Activated B cell treated with CpG ODN at 0.5 μM for 24 hours (primary cell): ENCODE measurements at regions of chr3 and their contacts with region 1.

Region 1: DNA sequence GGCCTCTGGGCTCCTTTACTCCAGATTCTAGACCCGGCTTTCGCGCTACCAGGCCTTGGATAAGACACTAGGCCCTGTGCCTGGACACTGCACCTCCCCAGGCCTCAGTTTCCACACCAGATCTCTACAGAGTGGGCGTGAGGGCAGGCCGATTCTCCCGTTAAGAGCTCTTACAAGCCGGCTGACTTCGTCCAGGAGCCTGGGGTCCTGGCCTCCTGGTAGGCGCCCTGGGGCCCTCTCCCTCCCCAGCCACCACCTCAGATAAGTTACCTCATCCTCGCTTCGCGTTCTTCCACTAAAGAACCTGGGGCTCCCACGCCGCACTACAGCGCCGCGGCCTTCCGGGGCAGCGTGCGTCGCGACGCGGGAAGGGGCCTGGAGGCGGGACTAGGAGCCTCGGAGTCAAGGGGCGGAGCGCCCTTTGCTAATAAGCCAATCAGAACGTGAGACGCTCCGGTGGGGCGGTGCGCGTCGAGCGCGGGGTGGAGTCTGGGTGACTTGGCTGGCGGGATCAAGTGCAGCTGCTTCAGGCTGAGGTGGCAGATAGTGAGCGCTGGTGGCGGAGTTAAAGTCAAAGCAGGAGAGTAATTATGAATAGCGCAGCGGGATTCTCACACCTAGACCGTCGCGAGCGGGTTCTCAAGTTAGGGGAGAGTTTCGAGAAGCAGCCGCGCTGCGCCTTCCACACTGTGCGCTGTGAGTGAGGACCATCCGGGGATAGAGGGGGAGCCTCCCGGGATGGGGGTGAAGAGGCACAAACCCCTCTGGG is at the starts of genes EAF2 and IQCB1:
- DNase-seq: peak; percentile 93
- ATAC-seq: peak; percentile 98
- H3K4me3 Mint-ChIP-seq: peak within 1 kb of the TSS; percentile 99
- H3K27ac Mint-ChIP-seq: peak within 1 kb of the TSS; percentile 95
- H3K4me1 Mint-ChIP-seq: peaks cover 67% of the 10 kb centered on the region
- H3K27me3 Mint-ChIP-seq: no peaks in the 10 kb centered on the region
- CTCF ChIP-seq: no peak
- total RNA-seq, gene EAF2: 43.3 and 47.7 TPM in 2 replicates
- total RNA-seq, gene IQCB1: 40.1 and 52.4 TPM in 2 replicates

Region 2: DNA sequence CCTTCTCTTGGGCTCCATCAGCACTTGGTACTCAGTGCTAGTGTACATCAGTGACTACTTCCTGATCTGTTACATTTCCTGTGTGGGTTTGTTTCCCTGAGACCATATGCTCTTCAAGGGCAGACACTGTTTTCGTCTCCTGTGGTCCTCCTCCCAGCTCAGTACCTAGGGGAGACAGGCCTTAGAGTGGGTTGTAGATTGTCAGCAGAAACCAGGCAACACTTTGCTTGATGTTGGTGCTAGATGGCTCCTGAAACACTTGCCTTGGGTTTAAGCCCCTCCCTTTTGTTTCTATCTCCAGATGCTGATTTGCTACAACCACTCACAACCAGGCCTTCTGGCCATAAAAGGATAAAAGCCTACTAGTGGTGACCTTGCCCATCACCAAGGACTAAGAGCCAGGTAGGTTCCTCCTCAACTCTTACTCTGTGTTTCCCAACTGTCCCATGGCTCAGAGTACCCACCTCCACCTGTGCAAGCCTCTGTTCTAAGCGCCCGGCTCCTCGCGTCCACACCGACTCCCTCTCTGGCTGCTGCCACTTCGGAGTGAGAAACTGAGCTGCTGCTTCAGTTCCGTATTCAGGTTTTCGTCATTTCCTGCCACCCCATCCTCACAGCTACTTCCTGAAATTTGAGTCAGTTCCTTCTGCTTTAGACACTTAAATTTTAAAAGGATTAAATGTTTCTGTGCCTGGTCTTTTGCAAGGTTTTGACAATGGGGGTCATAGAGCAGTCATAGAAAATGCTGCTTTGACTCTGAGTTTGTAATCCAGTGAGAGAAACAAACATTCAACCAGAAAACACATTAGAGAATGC is 174.3 kb before region 1 on chr3 and contains the start of gene HCLS1:
- CTCF ChIA-PET with region 1: no interaction called
- POLR2A ChIA-PET with region 1: interaction called, 9 read pairs
- intact Hi-C with region 1: loop called (anchors 1 kb)
- DNase-seq: peak; percentile 73
- ATAC-seq: peak; percentile 85
- H3K4me3 Mint-ChIP-seq: peak within 1 kb of the TSS; percentile 90
- H3K27ac Mint-ChIP-seq: peak within 1 kb of the TSS; percentile 96
- H3K4me1 Mint-ChIP-seq: peaks cover 55% of the 10 kb centered on the region
- H3K27me3 Mint-ChIP-seq: no peaks in the 10 kb centered on the region
- CTCF ChIP-seq: no peak
- total RNA-seq, gene HCLS1: 434 and 440 TPM in 2 replicates

Region 3: DNA sequence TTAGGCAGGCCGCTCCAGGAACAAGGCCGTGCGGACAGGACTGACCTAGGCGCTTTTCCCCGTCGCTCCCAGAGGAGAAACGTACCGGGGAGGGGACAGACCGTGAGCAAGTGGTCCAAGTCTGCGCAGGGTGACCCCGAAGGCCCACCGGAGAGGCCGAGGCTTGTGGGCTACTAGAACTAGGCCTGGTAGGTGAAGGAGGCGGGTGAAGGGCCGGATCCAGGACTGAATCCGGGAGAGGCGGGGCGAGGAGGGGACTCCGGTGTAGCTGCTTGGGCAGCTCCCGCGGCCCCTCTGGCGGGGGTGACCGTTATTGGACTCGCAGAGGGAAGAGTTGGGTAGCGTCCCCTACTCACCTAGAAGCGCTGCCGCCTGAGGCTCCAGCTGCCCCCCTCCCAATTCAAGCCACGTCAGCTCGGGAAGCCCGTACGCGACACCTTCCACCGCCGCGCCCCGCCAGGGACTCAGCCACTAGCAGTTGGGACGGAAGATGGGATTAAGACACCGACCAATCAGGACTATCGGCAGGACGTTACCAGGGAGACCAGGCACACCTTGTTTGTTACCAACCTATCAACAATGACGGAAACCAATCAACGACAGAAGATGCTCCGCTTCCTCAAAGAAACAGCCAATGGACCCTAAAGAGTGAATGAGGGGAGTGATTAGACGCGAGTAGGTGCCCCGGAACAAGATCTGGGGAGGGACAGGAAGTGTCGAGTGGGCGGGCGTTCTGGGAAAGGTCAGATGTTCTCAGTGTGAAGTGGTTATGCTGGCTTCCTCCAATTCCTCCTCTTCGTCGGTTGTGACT is 85.4 kb before region 1 on chr3 and contains the start of gene GOLGB1:
- CTCF ChIA-PET with region 1: no interaction called
- POLR2A ChIA-PET with region 1: interaction called, 14 read pairs
- intact Hi-C with region 1: loop called (anchors 1 kb)
- DNase-seq: peak; percentile 81
- ATAC-seq: peak; percentile 93
- H3K4me3 Mint-ChIP-seq: no peak within 1 kb of the TSS
- H3K27ac Mint-ChIP-seq: no peak within 1 kb of the TSS
- H3K4me1 Mint-ChIP-seq: peaks cover 4% of the 10 kb centered on the region
- H3K27me3 Mint-ChIP-seq: no peaks in the 10 kb centered on the region
- CTCF ChIP-seq: no peak
- total RNA-seq, gene GOLGB1: 37.3 and 44.7 TPM in 2 replicates

Region 4: DNA sequence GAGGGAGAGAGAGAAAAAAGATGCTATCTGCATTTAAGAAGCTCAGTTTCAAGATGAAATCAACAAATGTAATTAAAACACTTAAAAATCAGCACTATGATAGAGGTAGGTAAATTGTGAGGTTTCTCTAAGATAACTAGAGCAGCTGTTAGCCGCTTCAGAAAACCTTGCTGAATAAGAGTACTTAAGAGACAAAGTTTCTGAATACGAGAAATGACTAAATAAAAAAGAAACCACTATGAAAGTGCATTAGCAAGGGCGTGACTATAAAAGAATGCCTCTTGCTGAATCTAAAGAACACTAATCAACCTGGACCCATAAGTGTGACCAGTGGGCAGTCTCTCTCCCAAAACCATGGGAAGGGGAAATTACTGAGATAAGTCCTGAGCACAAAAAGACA is 41.8 kb before region 1 on chr3:
- CTCF ChIA-PET with region 1: no interaction called
- POLR2A ChIA-PET with region 1: interaction called, 24 read pairs
- intact Hi-C with region 1: loop called (anchors 1 kb)
- DNase-seq: no peak
- ATAC-seq: peak; percentile 55
- H3K4me3 Mint-ChIP-seq: peak overlapping the region; percentile 82
- H3K27ac Mint-ChIP-seq: peak overlapping the region; percentile 92
- H3K4me1 Mint-ChIP-seq: peaks cover 56% of the 10 kb centered on the region
- H3K27me3 Mint-ChIP-seq: no peaks in the 10 kb centered on the region
- CTCF ChIP-seq: no peak

Region 5: DNA sequence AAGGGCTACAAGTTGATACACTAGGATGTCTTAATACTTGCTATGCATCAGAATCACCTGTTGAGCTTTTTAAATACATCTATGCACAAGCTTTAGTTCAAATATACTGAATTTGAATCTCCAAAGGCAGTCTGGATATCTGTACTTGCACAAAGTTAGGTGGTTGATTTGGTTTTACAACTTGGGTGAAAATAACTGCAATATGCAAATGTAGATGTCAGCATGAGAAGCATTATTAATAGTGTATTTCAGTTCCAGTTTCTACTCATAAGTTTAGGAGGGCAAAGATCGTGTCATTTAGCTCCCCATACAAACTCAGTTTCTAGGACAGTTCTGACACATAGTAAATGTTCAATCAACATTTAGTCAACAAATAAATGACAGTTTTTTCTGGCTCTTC is 25.6 kb before region 1 on chr3:
- CTCF ChIA-PET with region 1: no interaction called
- POLR2A ChIA-PET with region 1: interaction called, 17 read pairs
- intact Hi-C with region 1: loop called (anchors 1 kb)
- DNase-seq: no peak
- ATAC-seq: peak; percentile 89
- H3K4me3 Mint-ChIP-seq: peak overlapping the region; percentile 72
- H3K27ac Mint-ChIP-seq: peak overlapping the region; percentile 89
- H3K4me1 Mint-ChIP-seq: peaks cover 81% of the 10 kb centered on the region
- H3K27me3 Mint-ChIP-seq: no peaks in the 10 kb centered on the region
- CTCF ChIP-seq: no peak

Region 6: DNA sequence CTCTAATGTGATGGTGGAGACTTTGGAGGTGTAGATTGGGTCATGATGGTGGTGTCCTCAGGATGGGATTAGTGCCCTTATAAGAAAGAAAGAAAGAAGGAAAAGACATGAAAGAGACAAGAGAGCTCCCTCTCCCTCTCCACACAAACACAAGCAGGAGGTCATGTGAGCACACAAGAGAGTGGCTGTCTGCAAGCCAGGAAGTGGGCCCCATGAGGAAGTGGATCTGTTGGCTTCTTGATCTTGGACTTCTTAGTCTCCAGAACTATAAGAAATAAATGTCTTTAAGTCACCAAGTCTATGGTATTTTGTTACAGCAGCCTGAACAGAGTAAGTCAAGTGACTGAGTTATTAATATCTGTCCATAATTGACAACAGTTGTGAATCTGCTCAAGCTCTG is 17.1 kb before region 1 on chr3:
- CTCF ChIA-PET with region 1: no interaction called
- POLR2A ChIA-PET with region 1: no interaction called
- intact Hi-C with region 1: loop called (anchors 2 kb)
- DNase-seq: no peak
- ATAC-seq: no peak
- H3K4me3 Mint-ChIP-seq: no peak overlapping the region
- H3K27ac Mint-ChIP-seq: peak overlapping the region; percentile 19
- H3K4me1 Mint-ChIP-seq: peaks cover 74% of the 10 kb centered on the region
- H3K27me3 Mint-ChIP-seq: no peaks in the 10 kb centered on the region
- CTCF ChIP-seq: no peak

Region 7: DNA sequence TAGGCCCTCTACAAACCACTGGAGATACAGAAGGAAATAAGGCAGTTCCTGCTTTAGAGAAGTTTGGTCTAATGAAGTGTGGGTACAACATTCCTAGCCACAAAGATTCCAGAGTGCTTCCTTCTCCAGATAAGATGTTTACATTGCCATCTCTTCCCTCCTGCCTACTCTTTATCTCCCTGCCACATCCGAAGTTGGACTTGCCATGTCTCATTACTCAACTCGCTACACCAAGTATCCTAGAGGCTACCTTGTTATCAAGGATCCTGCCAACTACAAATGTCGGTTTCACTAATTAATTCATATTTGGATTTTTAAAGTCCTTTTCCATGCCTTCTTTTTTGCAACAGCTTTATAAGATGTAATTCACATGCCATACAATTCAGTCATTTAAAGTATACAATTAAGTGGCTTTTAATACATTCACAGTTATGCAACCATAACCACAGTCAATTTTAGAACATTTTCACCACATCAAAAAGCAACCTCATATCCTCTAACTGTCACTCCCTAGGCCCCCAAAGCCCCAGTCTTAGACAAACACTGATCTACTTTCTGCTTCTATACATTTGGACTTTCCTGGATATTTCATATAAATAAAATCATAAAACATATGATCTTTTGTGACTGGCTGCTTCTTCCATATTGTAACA is 436.5 kb after region 1 on chr3:
- CTCF ChIA-PET with region 1: no interaction called
- POLR2A ChIA-PET with region 1: no interaction called
- intact Hi-C with region 1: no loop called
- DNase-seq: no peak
- ATAC-seq: no peak
- H3K4me3 Mint-ChIP-seq: no peak overlapping the region
- H3K27ac Mint-ChIP-seq: no peak overlapping the region
- H3K4me1 Mint-ChIP-seq: peaks cover 9% of the 10 kb centered on the region
- H3K27me3 Mint-ChIP-seq: no peaks in the 10 kb centered on the region
- CTCF ChIP-seq: no peak

Region 8: GRCh38 chr3:122383771-122384697 is 549.2 kb after region 1 on chr3 and contains the start of gene FAM162A:
- CTCF ChIA-PET with region 1: no interaction called
- POLR2A ChIA-PET with region 1: interaction called, 4 read pairs
- intact Hi-C with region 1: loop called (anchors 2 kb)
- DNase-seq: peak; percentile 93
- ATAC-seq: peak; percentile 94
- H3K4me3 Mint-ChIP-seq: peak within 1 kb of the TSS; percentile 94
- H3K27ac Mint-ChIP-seq: peak within 1 kb of the TSS; percentile 91
- H3K4me1 Mint-ChIP-seq: peaks cover 38% of the 10 kb centered on the region
- H3K27me3 Mint-ChIP-seq: no peaks in the 10 kb centered on the region
- CTCF ChIP-seq: no peak
- total RNA-seq, gene FAM162A: 28.5 and 33.9 TPM in 2 replicates

Region 9: DNA sequence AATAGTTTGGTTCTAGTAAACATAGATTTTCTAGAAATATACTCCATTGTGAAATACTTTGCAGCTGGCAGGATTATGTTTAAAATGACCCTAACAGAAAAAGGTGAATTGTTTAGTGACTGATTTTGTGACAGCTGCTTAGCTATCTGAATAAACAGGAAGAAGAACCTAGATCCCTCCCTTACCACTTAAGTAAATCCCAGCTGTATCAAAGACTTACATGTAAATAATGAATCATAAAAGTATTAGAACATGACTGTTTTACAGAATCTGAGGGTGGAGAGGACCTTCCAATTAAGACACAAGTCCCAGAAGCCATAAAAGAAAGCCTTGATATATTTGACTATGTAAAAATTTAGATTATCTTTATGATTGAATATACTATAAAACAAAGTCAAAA is 975.9 kb after region 1 on chr3:
- CTCF ChIA-PET with region 1: no interaction called
- POLR2A ChIA-PET with region 1: no interaction called
- intact Hi-C with region 1: no loop called
- DNase-seq: no peak
- ATAC-seq: no peak
- H3K4me3 Mint-ChIP-seq: no peak overlapping the region
- H3K27ac Mint-ChIP-seq: no peak overlapping the region
- H3K4me1 Mint-ChIP-seq: no peaks in the 10 kb centered on the region
- H3K27me3 Mint-ChIP-seq: no peaks in the 10 kb centered on the region
- CTCF ChIP-seq: no peak